MCF 10A (cell line): ENCODE measurements at regions of chr2 and their contacts with region 1.

Region 1: GRCh38 chr2:37672104-37672869 is 845 bp upstream of the CDC42EP3 start:
- DNase-seq: peak; percentile 86
- H3K4me3 Mint-ChIP-seq: peak overlapping the region; percentile 92
- H3K27ac Mint-ChIP-seq: peak overlapping the region; percentile 77
- H3K4me1 Mint-ChIP-seq: peaks cover 35% of the 10 kb centered on the region
- H3K27me3 Mint-ChIP-seq: no peaks in the 10 kb centered on the region
- CTCF ChIP-seq: no peak

Region 2: GRCh38 chr2:37585982-37586621 is 86.2 kb before region 1 on chr2:
- CTCF ChIA-PET with region 1: interaction called, 3 read pairs
- POLR2A ChIA-PET with region 1: interaction called, 9 read pairs
- intact Hi-C with region 1: loop called (anchors 5 kb)
- DNase-seq: peak; percentile 91
- H3K4me3 Mint-ChIP-seq: peak overlapping the region; percentile 29
- H3K27ac Mint-ChIP-seq: peak overlapping the region; percentile 46
- H3K4me1 Mint-ChIP-seq: peaks cover 79% of the 10 kb centered on the region
- H3K27me3 Mint-ChIP-seq: no peaks in the 10 kb centered on the region
- CTCF ChIP-seq: no peak

Region 3: DNA sequence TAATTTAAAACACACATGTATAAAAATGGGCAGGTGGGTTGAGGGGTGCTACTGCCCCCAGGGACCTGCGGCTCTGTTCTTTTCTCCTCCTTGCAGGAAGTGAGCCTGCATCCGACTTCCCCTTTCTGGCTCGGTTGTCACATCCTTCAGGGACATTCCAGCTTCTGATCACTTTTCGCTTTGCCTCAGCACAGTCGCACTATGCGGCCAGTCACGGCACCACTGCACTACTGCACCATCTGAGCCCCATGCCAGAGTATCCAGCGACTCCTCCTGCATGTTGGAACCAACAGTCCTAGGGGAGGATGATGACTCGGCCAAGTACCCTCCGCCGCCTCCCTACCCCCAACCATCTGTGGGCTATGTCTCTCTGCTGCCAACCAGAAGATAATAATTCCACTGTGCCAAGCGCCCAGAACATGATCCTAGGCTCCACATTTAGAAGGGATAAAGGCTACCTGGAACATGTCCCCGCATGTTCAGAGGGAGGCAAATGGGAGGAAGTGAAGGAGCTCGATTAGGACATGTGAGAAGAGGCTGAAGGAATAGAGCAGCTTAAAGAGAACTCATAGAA is 18.4 kb before region 1 on chr2:
- CTCF ChIA-PET with region 1: interaction called, 12 read pairs
- POLR2A ChIA-PET with region 1: interaction called, 90 read pairs
- intact Hi-C with region 1: no loop called
- DNase-seq: peak; percentile 89
- H3K4me3 Mint-ChIP-seq: peak overlapping the region; percentile 33
- H3K27ac Mint-ChIP-seq: peak overlapping the region; percentile 97
- H3K4me1 Mint-ChIP-seq: peaks cover 75% of the 10 kb centered on the region
- H3K27me3 Mint-ChIP-seq: no peaks in the 10 kb centered on the region
- CTCF ChIP-seq: no peak

Region 4: DNA sequence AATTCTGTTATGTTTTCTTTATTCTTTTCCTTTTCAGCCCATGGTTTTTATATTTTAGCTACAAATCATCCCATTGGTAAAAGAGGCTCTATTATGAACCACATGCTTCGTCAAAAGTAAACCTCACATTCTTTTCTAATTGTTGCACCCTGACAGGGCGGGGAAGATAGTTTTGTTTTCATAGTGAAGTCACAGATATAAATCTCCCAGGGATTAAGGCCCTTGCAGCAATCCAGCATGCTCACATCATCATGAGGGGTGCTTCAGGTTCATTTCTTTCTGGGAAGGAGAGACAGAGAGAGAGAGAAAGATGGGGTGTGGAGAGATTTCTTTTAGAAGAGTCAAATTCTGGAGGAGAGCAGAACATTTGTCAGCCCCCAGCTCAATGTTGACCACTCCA is 123.7 kb after region 1 on chr2:
- CTCF ChIA-PET with region 1: no interaction called
- POLR2A ChIA-PET with region 1: interaction called, 10 read pairs
- intact Hi-C with region 1: no loop called
- DNase-seq: peak; percentile 62
- H3K4me3 Mint-ChIP-seq: no peak overlapping the region
- H3K27ac Mint-ChIP-seq: peak overlapping the region; percentile 88
- H3K4me1 Mint-ChIP-seq: peaks cover 28% of the 10 kb centered on the region
- H3K27me3 Mint-ChIP-seq: no peaks in the 10 kb centered on the region
- CTCF ChIP-seq: no peak

Region 5: GRCh38 chr2:37809525-37809924 is 137.2 kb after region 1 on chr2:
- CTCF ChIA-PET with region 1: interaction called, 3 read pairs
- POLR2A ChIA-PET with region 1: interaction called, 3 read pairs
- intact Hi-C with region 1: loop called (anchors 1 kb)
- DNase-seq: peak; percentile 65
- H3K4me3 Mint-ChIP-seq: no peak overlapping the region
- H3K27ac Mint-ChIP-seq: no peak overlapping the region
- H3K4me1 Mint-ChIP-seq: no peaks in the 10 kb centered on the region
- H3K27me3 Mint-ChIP-seq: no peaks in the 10 kb centered on the region
- CTCF ChIP-seq: peak; percentile 49

Region 6: DNA sequence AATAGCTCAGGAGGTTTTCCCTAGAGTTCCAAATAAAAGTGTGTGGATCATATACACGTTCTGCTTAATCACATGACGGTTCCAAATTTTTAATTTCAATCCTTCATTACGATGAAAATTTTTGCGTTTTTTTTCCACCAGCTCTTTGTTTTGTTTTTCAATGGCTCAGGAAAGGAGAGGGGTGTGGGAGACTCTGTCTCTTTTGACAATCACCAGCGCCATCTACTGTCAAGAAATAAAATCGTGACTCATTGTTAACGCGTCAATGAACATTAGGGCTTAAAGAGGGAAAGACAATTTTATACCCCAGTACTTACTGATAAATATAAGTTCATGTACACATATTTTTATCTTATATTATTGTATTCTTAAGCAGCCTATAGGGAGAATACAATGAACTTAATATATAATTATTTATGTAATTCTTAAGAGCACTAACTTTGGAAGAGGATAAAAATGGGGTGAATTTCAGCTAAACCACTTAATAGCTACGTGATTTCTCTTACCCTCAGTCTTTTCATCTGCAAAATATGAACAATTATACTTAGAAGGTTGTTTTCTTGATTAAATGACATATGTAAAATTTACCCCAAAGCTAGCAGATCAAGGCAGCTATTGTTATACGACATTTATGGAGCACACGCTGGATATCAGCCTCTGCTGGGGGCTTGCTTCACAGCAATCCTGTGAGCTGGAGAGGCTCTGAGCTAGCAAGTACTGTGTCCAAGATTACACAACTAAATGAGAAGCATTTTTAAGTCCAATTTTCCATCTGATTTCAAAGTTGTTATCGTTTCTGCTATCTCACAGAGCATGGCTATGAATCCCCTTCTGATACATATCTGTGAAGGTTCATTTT is 205.4 kb after region 1 on chr2:
- CTCF ChIA-PET with region 1: interaction called, 9 read pairs
- POLR2A ChIA-PET with region 1: interaction called, 3 read pairs
- intact Hi-C with region 1: loop called (anchors 1 kb)
- DNase-seq: peak; percentile 78
- H3K4me3 Mint-ChIP-seq: no peak overlapping the region
- H3K27ac Mint-ChIP-seq: no peak overlapping the region
- H3K4me1 Mint-ChIP-seq: peaks cover 4% of the 10 kb centered on the region
- H3K27me3 Mint-ChIP-seq: peaks cover 12% of the 10 kb centered on the region
- CTCF ChIP-seq: peak; percentile 79